ENCODE measurements at regions of chr12 and their contacts with region 1.

Region 1: GRCh38 chr12:56104109-56104814 is at the start of gene PA2G4:
- DNase-seq: peak; percentile 99
- H3K4me3 Mint-ChIP-seq: peak within 1 kb of the TSS; percentile 99
- H3K27ac Mint-ChIP-seq: peak within 1 kb of the TSS; percentile 99
- H3K4me1 Mint-ChIP-seq: peaks cover 38% of the 10 kb centered on the region
- H3K27me3 Mint-ChIP-seq: no peaks in the 10 kb centered on the region
- total RNA-seq, gene PA2G4: 398 to 411 TPM

Region 2: GRCh38 chr12:55728939-55729823 is 375.1 kb before region 1 on chr12 and contains the start of gene CD63:
- CTCF ChIA-PET with region 1: no interaction called
- intact Hi-C with region 1: loop called (anchors 1 kb)
- DNase-seq: peak; percentile 81
- H3K4me3 Mint-ChIP-seq: peak within 1 kb of the TSS; percentile 90
- H3K27ac Mint-ChIP-seq: peak within 1 kb of the TSS; percentile 87
- H3K4me1 Mint-ChIP-seq: peaks cover 29% of the 10 kb centered on the region
- H3K27me3 Mint-ChIP-seq: no peaks in the 10 kb centered on the region
- total RNA-seq, gene CD63: 62.3 to 73.6 TPM

Region 3: DNA sequence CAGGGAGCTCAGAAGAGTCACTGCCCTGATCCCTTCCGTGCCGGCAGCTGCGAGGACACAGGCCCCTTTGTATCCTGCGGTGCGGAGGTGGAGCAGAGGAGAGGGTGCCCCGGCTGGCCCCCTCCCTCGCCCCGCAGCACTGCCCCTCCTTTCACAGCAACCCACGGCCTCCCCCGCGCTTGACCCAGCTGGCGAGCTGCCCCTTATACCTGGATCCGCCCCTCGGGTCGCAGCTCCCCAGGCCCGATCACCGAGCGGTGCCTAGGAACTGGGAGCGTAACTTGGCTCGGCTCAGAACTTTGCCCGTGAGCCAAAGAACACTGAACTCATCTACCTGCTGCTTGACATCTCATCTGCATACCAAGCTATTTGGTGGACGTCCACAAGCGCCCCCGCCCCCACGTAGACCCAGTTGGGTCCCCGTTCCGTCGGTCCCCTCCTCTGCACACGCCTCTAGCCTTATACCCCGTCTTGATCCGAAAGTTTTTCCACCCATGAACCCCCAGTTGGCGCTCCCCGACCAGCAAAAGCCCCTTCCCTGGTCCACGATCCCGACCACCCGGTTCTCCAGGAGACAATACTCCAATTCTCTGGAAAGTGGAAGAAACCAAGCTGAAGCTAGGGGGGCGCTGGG is 274.2 kb before region 1 on chr12:
- CTCF ChIA-PET with region 1: no interaction called
- intact Hi-C with region 1: loop called (anchors 1 kb)
- DNase-seq: peak; percentile 24
- H3K4me3 Mint-ChIP-seq: peak overlapping the region; percentile 96
- H3K27ac Mint-ChIP-seq: peak overlapping the region; percentile 87
- H3K4me1 Mint-ChIP-seq: peaks cover 52% of the 10 kb centered on the region
- H3K27me3 Mint-ChIP-seq: no peaks in the 10 kb centered on the region

Region 4: DNA sequence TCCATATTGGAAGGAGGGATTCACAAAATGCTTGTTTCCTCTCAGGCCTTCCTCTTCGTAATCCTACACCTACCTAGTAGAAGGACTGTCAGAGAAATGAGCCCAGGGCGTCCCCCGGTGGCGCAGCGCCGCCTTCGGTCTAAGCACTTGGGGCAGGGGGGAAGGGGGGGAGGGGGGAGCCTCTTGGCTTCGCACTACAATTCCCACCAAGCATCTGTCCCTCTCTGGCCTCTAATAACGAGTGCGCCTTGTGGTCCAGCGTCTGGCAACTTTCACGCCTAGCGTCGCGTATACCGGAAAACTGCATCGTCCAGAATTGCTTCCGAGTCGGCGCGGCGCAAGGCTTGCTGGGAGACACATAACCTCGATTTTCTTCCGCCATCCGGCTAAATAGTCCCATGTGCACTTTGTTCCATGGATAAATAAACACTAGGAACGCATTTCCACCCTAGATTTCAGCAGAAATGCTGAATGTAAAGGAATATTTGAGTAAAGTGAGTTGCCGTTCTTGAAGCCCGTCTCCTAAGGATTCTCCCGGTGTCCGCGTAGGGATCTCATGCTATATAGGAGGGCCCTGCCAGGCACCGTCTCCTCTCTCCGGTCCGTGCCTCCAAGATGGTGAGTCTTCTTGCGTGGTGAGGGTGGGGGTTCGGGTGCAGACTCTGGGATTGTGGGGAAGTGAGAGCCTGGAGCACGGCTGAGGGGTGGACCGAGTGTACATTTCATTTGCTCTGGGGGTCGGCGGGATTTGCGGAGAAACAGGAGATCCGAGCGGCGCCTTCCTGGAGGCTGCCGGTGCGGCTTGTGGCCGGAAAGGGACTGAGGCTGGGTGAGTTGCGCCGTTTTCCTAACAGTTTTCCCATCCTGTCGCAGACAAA is 62.5 kb before region 1 on chr12 and contains the start of gene RPS26:
- CTCF ChIA-PET with region 1: interaction called, 18 read pairs
- intact Hi-C with region 1: loop called (anchors 1 kb)
- DNase-seq: peak; percentile 96
- H3K4me3 Mint-ChIP-seq: peak within 1 kb of the TSS; percentile 96
- H3K27ac Mint-ChIP-seq: peak within 1 kb of the TSS; percentile 98
- H3K4me1 Mint-ChIP-seq: peaks cover 57% of the 10 kb centered on the region
- H3K27me3 Mint-ChIP-seq: no peaks in the 10 kb centered on the region
- total RNA-seq, gene RPS26: 31.0 to 37.3 TPM

Region 5: DNA sequence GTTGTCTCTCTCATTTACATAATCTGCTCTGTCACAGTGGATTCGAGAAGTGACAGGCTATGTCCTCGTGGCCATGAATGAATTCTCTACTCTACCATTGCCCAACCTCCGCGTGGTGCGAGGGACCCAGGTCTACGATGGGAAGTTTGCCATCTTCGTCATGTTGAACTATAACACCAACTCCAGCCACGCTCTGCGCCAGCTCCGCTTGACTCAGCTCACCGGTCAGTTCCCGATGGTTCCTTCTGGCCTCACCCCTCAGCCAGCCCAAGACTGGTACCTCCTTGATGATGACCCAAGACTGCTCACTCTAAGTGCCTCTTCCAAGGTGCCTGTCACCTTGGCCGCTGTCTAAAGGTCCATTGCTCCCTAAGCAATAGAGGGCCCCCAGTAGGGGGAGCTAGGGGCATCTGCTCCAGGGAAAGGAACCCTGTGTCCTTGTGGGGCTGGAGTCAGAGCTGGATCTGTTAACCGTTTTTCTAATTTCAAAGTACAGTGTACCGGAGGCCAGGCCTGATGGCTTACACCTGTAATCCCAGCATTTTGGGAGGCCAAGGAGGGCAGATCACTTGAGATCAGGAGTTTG is 19.2 kb before region 1 on chr12:
- CTCF ChIA-PET with region 1: interaction called, 22 read pairs
- intact Hi-C with region 1: loop called (anchors 1 kb)
- DNase-seq: peak; percentile 55
- H3K4me3 Mint-ChIP-seq: no peak overlapping the region
- H3K27ac Mint-ChIP-seq: no peak overlapping the region
- H3K4me1 Mint-ChIP-seq: peaks cover 8% of the 10 kb centered on the region
- H3K27me3 Mint-ChIP-seq: peaks cover 13% of the 10 kb centered on the region

Region 6: GRCh38 chr12:56152318-56153033 is 48.2 kb after region 1 on chr12 and contains the start of gene MYL6B:
- CTCF ChIA-PET with region 1: no interaction called
- intact Hi-C with region 1: loop called (anchors 1 kb)
- DNase-seq: peak; percentile 98
- H3K4me3 Mint-ChIP-seq: peak within 1 kb of the TSS; percentile 84
- H3K27ac Mint-ChIP-seq: peak within 1 kb of the TSS; percentile 98
- H3K4me1 Mint-ChIP-seq: peaks cover 37% of the 10 kb centered on the region
- H3K27me3 Mint-ChIP-seq: no peaks in the 10 kb centered on the region
- total RNA-seq, gene MYL6B: 49.2 to 57.5 TPM

Measured in activated naive CD4-positive, alpha-beta T cell treated with anti-CD3 and anti-CD28 coated beads for 36 hours (primary cell).